PC-9 (cell line): ENCODE measurements at regions of chr18 and their contacts with region 1.

Region 1: DNA sequence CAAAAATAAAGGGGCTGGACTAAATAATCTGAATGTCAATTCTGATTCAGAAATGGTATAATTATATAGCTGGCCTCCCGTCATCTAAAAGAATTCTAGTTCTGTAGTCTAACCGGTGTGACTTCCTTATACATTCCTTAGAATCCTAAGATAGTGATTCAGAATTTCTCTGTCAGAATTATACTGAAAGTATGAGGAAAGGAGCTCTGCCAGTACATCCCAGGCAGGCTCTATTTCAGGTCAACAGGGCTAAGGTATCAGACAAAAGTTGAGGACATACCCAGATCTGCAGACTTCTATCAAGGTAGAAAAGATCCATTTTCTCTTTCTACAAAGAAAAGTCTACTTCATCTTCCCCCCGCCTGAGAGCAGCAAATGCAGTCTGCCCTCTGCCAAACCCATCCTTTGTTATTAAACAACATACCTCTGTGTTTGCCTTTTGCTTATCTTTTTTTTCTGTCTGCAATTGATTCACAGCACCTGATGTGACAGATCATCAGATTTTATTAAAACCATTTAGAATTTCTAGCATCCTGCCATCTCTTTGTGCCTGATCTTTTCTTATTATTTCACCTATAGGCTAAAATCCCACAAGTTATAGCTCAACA is 128.4 kb downstream of the METTL4 start:
- DNase-seq: peak; percentile 55 to 93
- H3K4me3 ChIP-seq: no peak overlapping the region; the same call in 1 of the 2 replicates
- H3K27ac ChIP-seq: peak overlapping the region; percentile 63
- H3K4me1 ChIP-seq: peaks cover 28% of the 10 kb centered on the region
- H3K27me3 ChIP-seq: no peaks in the 10 kb centered on the region
- CTCF ChIP-seq: no peak

Region 2: GRCh38 chr18:2411381-2411960 is 31.4 kb before region 1 on chr18:
- CTCF ChIA-PET with region 1: no interaction called
- POLR2A ChIA-PET with region 1: interaction called, 14 read pairs
- intact Hi-C with region 1: loop called (anchors 1 kb)
- DNase-seq: peak; percentile 12 to 75
- H3K4me3 ChIP-seq: no peak overlapping the region; the same call in 1 of the 2 replicates
- H3K27ac ChIP-seq: peak overlapping the region; percentile 70
- H3K4me1 ChIP-seq: peaks cover 34% of the 10 kb centered on the region
- H3K27me3 ChIP-seq: no peaks in the 10 kb centered on the region
- CTCF ChIP-seq: no peak

Region 3: DNA sequence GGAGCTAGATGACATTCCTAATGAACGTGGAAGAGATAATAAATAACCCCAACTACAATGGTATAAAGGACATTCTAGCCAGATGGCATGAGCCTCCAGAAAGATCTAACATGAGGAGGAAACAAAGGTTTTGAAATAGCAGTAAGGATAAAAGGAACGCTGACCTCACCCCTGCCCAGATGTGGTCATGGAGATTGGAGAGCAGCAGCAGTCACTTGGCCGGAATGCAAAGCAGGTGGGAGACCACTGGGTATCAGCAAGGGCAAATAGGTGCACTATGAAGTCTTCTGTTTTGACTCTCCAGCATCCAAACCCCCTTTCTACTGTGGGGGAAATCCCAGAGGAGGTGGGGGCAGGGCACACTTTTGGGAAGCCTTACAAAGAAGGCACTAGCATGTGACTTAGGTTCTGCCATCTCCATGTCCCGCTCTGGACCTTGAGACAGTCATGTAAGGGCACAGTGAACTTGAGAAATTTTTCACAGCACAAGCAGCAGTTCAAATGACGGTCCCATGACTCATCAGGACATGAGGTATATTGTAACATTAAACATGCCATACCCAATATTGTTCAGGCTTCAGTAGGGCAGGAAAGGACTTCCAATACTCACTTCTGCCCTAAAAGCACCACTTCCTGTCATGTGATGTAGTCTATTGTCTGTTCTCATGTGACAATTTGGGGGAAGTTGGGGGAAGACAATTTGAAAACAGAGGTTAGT is 73.2 kb after region 1 on chr18:
- CTCF ChIA-PET with region 1: no interaction called
- POLR2A ChIA-PET with region 1: interaction called, 4 read pairs
- intact Hi-C with region 1: loop called (anchors 2 kb)
- DNase-seq: peak; percentile 47 to 70
- H3K4me3 ChIP-seq: no peak overlapping the region
- H3K27ac ChIP-seq: peak overlapping the region; percentile 72
- H3K4me1 ChIP-seq: peaks cover 19% of the 10 kb centered on the region
- H3K27me3 ChIP-seq: no peaks in the 10 kb centered on the region
- CTCF ChIP-seq: no peak

Region 4: DNA sequence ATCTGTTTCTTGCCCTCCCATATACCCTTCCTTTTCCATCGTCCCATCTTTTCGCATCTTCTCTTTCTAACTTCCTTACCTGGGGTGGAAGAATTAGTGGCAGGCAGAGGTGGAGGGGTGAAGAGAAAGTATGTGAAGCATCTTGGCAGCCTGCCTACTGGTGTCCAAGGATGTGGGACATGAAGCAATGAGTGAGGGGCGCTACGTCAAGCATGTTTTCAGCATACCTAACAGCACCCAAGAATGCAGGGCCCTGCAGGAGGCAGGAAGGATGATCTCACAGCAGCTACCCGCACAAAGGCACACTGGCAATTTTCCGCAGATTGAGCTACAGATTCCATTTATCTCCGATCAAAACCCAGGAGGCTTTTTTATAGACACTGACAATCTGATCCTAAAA is 86.3 kb after region 1 on chr18:
- CTCF ChIA-PET with region 1: no interaction called
- POLR2A ChIA-PET with region 1: interaction called, 3 read pairs
- intact Hi-C with region 1: loop called (anchors 1 kb)
- DNase-seq: peak in 1 of 2 experiments; percentile 77
- H3K4me3 ChIP-seq: no peak overlapping the region
- H3K27ac ChIP-seq: no peak overlapping the region
- H3K4me1 ChIP-seq: no peaks in the 10 kb centered on the region
- H3K27me3 ChIP-seq: no peaks in the 10 kb centered on the region
- CTCF ChIP-seq: no peak